H1 (cell line): ENCODE measurements at regions of chr3 and their contacts with region 1.

Region 1: DNA sequence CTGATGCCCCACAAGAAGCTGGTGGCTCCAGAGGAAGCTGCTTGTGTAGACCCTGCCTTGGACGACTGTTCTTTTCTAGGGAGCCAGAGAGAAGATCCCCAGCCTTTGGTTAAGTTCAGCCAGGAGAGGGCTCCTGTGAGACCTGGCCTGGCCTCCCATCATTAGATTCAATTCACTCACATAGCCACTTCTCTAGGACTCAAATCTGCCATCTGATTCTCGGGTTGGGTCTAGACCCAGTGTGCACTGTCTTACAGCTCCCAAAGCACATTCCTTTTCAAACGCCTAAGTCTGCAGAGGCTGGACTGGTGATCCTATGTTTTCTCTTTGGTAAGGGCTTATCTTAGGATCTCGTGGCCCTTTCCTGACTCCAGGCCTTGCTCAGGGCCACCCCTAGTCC is 81.7 kb upstream of the NPHP3 start:
- DNase-seq: peak; percentile 15 to 49
- H3K4me3 ChIP-seq: no peak overlapping the region
- H3K27ac ChIP-seq: no peak overlapping the region
- H3K4me1 ChIP-seq: no peaks in the 10 kb centered on the region
- H3K27me3 ChIP-seq: no peaks in the 10 kb centered on the region
- CTCF ChIP-seq: peak; percentile 39 to 64 (median 56)
- EP300 ChIP-seq: no peak
- POLR2A ChIP-seq: no peak
- RAD21 ChIP-seq: peak; percentile 62 to 70

Region 2: DNA sequence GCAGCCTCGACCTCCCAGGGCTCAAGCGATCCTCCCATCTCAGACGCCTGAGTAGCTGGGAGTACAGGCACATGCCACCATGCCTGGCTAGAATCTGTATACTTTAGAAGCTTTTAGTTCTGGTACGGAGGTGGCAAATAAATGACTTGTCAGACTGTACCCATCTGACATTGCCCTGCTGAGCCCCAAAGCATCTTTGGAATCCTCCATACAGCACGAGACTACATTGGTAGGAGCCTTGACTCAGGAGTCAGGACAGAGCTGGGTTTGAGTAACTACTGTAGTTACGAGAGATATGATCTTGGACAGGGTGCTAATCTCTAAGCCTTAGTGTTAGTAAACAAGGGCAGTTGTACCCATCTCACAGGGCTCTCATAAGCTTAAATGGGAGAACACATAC is 13.9 kb before region 1 on chr3:
- CTCF ChIA-PET with region 1: interaction called, 10 read pairs
- POLR2A ChIA-PET with region 1: no interaction called
- DNase-seq: no peak
- H3K4me3 ChIP-seq: no peak overlapping the region
- H3K27ac ChIP-seq: no peak overlapping the region
- H3K4me1 ChIP-seq: no peaks in the 10 kb centered on the region
- H3K27me3 ChIP-seq: no peaks in the 10 kb centered on the region
- CTCF ChIP-seq: no peak
- EP300 ChIP-seq: no peak
- POLR2A ChIP-seq: no peak
- RAD21 ChIP-seq: no peak

Region 3: GRCh38 chr3:132867956-132868355 is 64.1 kb after region 1 on chr3:
- CTCF ChIA-PET with region 1: no interaction called
- POLR2A ChIA-PET with region 1: no interaction called
- DNase-seq: no peak
- H3K4me3 ChIP-seq: no peak overlapping the region
- H3K27ac ChIP-seq: no peak overlapping the region
- H3K4me1 ChIP-seq: no peaks in the 10 kb centered on the region
- H3K27me3 ChIP-seq: no peaks in the 10 kb centered on the region
- CTCF ChIP-seq: no peak
- EP300 ChIP-seq: no peak
- POLR2A ChIP-seq: no peak
- RAD21 ChIP-seq: no peak